ENCODE measurements at regions of chr6 and their contacts with region 1.

Region 1: DNA sequence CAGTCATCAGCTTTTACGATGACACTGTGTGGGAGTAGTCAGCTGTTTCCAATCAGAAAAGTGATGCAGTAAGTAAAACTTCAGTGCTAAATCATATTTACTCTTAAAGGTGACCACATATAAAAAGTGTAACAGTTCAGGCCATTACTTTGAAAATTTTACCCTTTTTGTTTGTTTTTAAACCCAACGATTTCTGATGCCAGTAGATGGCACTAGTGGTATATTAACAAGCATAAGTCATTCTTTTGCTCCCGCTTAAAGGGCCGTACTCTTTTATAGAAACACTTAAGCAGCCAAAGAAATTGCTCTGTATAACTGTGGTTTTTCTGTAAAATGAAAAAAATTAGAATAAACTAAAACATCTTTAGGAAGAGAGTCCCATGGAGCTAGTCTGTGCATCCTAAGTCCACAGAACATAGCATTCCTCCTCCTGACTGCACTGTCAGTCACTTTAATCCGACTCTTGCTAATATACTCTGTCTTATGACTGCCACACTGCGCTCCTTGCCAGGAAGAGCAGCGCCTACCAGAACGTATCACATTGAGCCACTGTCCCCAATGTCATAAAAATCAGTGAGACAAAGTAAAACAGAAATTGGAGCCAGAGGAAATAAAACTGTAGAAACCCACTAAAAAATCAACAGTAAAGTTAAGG is 25.0 kb downstream of the HEBP2 start:
- DNase-seq: peak in 1 of 2 donors; percentile 81
- H3K4me3 ChIP-seq: no peak overlapping the region
- H3K27ac ChIP-seq: peak overlapping the region in 1 of 5 donors; percentile 9
- H3K4me1 ChIP-seq: peaks cover 0 to 27% (median 7%) of the 10 kb centered on the region in 4 donors
- H3K27me3 ChIP-seq: no peaks in the 10 kb centered on the region
- CTCF ChIP-seq: peak in 5 of 7 experiments; percentile 32 to 60 (median 53)
- EP300 ChIP-seq: no peak
- POLR2A ChIP-seq: no peak

Region 2: DNA sequence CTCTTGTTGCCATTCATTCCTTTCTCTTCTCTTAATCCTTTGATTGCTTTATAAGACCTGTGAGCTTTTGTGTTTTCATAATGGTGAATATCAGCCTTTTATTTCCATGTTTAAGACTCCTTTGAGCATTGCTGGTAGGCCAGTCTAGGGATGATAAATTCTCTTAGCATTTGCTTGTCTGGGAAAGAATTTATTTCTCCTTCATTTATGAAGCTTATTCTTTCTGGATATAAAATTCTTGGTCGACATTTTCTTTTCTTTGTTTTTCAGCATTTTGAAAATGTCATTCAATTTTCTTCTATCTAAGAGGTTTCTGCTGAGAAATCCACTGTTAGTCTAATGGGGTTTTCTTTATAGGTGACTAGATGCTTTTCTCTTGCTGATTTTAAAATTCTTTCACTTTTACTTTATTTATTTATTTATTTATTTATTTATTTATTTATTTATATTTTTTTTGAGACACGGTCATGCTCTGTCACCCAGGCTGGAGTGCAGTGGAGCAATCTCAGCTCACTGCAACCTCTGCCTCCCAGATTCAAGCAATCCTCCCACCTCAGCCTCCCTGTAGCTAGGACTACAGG is 252.3 kb before region 1 on chr6:
- intact Hi-C with region 1: no loop called
- DNase-seq: no peak
- H3K4me3 ChIP-seq: no peak overlapping the region
- H3K27ac ChIP-seq: no peak overlapping the region
- H3K4me1 ChIP-seq: peaks cover 0 to 4% (median 2%) of the 10 kb centered on the region in 4 donors
- H3K27me3 ChIP-seq: no peaks in the 10 kb centered on the region
- CTCF ChIP-seq: no peak
- EP300 ChIP-seq: no peak
- POLR2A ChIP-seq: no peak

Region 3: DNA sequence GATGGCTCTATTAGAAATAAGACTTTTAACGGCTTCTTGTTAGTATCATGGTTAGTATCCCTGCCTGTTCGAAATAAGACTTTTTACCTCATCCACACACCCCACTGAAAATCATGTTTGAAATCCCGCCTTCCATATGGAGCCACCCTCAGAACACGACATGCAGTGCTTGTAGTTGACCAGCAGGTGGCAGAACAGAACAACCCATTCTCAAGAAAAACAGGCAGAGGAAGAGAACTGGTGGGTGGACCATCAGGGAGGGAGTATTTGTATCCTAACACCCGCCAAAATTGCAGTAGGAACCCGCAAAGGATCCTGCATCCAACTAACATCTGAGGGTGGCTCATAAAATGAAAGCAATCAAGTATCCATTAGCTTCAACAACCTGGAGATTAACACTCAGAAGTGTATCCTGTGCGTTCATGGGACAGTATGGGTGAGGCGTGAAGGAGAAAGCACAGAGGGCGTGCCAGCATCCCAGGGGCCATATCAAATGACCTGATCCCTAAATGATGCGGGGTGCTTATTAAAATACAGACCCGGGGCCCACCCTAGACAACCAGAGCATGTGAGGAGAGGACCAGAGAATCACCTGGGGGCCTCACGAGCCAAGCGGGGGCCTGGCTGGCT is 159.8 kb after region 1 on chr6:
- intact Hi-C with region 1: loop called (anchors 5 kb)
- DNase-seq: peak; percentile 59 to 92
- H3K4me3 ChIP-seq: no peak overlapping the region
- H3K27ac ChIP-seq: no peak overlapping the region
- H3K4me1 ChIP-seq: peaks cover 0 to 24% (median 17%) of the 10 kb centered on the region in 4 donors
- H3K27me3 ChIP-seq: no peaks in the 10 kb centered on the region
- CTCF ChIP-seq: peak in 5 of 7 experiments; percentile 90 to 95 (median 92)
- EP300 ChIP-seq: no peak
- POLR2A ChIP-seq: no peak

Region 4: DNA sequence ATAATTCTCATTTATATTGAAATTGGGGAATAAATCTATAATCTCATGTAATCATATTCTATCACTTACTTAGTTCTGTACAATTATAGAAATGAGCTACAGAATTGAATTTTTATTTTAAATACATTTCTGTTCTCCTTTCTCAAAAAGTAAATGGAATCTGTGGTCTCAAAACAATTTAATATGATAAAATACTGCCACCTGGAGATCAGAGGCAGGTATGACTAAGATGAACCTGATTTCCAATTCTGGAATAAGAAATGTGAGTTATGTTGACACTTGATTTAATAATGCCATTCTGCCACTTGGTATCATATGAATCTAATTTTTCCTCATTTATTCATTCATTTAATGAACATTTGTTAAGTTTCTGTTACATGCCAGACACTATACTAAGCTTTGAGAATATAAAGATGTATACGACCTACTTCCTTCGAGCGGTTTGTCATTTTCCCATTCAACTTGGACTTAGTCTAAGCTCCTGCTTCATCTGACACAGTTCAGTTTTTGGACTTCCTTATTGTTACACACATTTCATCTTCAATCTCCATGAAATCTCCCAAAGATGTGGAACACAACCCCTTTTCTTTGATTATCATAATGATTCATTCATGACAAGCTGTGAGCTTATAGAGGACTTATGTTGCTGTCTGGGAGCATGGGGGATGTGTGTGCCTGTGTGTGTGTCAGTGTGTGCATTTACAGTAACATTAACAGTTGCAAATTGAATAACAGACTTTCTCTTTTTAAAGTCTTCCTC is 337.0 kb after region 1 on chr6:
- intact Hi-C with region 1: loop called (anchors 10 kb)
- DNase-seq: peak in 1 of 2 donors; percentile 57
- H3K4me3 ChIP-seq: no peak overlapping the region
- H3K27ac ChIP-seq: no peak overlapping the region
- H3K4me1 ChIP-seq: no peaks in the 10 kb centered on the region
- H3K27me3 ChIP-seq: no peaks in the 10 kb centered on the region
- CTCF ChIP-seq: peak in 5 of 7 experiments; percentile 54 to 73 (median 62)
- EP300 ChIP-seq: no peak
- POLR2A ChIP-seq: no peak